Posterior vena cava (tissue), 2 donors: ENCODE measurements at regions of chr5 and their contacts with region 1.

Region 1: DNA sequence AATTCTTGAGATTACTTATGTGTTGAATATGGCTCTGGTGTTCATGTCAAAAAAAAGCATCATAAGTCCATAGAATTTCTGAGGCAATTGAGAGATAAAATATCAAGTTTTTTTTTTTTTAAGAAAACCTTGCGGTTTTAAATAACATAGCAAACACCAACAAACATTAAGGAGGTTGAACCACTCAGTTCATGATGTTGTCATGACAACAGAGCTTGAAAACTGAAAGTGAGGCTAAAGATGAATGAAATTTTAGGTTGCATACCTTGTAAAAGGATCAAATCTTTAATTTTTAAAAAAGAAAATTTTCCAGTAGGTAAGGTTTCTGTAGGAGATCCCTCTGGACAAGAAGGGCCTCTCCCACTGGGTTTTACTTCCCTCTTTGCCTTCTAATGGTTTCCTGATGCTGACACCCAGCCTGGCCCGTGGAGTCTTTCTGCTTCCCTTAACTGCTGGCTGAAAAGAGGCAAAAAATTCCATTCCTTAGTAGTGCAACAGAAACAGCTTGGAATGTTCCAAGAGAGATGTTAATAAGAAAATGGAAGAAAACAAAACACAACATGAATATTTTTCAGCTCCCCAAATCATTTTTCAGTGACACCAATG is 60.0 kb upstream of the FER start:
- DNase-seq: no peak

Region 2: DNA sequence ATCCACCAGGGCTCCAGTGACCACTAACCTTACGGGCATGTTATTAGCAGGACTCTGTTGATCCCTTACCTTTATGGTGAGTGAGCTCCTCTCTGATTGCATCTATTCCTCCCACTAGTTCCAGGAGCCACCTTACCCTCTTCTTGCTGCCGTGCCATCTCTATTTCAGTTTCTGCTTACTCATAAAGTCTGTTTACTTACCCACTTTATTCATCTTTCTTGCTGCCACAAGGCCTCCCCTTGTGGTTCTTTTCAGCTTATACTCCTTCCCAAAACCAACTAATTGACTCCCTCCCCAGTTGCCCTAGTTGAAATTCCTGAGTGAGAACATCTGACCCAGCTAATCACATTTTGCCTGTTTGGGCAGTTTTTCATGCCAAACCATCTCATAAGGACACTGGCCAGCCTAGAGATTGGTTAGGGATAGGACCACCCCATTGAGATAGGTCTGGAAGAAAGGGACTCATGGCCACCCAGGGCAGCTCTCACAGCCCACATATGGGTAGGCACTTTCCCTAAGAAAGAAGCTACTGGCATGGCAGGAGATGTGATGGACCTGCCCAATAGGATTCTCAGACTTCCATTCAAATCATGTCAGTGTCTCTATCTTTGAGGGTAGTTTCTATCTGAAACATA is 1429.7 kb before region 1 on chr5:
- intact Hi-C with region 1: no loop called
- DNase-seq: no peak

Region 3: GRCh38 chr5:108727651-108728565 is 40.2 kb after region 1 on chr5:
- intact Hi-C with region 1: loop called in 1 of 2 experiments (anchors 5 kb)
- DNase-seq: peak; percentile 97